Activated CD4-positive, alpha-beta memory T cell treated with anti-CD3 and anti-CD28 coated beads for 36 hours (primary cell): ENCODE measurements at regions of chr20 and their contacts with region 1.

Region 1: GRCh38 chr20:45373353-45374100 is 4.6 kb downstream of the TP53TG5 start:
- DNase-seq: peak; percentile 94
- H3K4me3 Mint-ChIP-seq: peak overlapping the region; percentile 79
- H3K27ac Mint-ChIP-seq: peak overlapping the region; percentile 87
- H3K4me1 Mint-ChIP-seq: peaks cover 25% of the 10 kb centered on the region
- H3K27me3 Mint-ChIP-seq: no peaks in the 10 kb centered on the region

Region 2: DNA sequence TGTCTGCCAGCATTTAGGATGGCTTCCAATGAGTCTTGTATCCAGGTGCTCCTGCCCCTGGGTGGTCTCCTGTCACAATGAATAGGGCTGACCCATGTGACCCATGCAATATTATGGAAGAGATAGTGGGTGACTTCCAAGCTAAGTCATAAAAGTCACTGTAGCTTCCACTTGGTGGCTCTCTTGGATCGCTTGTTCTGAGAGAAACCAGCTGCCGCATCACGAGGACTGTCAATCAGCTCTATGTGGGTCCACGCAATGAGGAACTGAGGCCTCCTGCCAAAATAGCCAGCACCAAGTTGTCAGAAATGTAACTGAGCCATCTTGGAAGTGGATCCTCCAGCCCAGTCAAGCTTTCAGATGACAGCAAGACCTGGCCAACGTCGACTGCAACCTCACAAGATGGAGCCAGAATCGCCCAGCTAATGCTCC is 50.6 kb before region 1 on chr20:
- CTCF ChIA-PET with region 1: interaction called, 41 read pairs
- POLR2A ChIA-PET with region 1: no interaction called
- intact Hi-C with region 1: no loop called
- DNase-seq: no peak
- H3K4me3 Mint-ChIP-seq: no peak overlapping the region
- H3K27ac Mint-ChIP-seq: no peak overlapping the region
- H3K4me1 Mint-ChIP-seq: peaks cover 26% of the 10 kb centered on the region
- H3K27me3 Mint-ChIP-seq: no peaks in the 10 kb centered on the region

Region 3: GRCh38 chr20:45362804-45363610 is 10.5 kb before region 1 on chr20 and contains the start of gene SYS1:
- CTCF ChIA-PET with region 1: interaction called, 175 read pairs
- POLR2A ChIA-PET with region 1: interaction called, 19 read pairs
- intact Hi-C with region 1: loop called (anchors 1 kb)
- DNase-seq: peak; percentile 99
- H3K4me3 Mint-ChIP-seq: peak within 1 kb of the TSS; percentile 96
- H3K27ac Mint-ChIP-seq: peak within 1 kb of the TSS; percentile 94
- H3K4me1 Mint-ChIP-seq: peaks cover 46% of the 10 kb centered on the region
- H3K27me3 Mint-ChIP-seq: no peaks in the 10 kb centered on the region
- total RNA-seq, gene SYS1: 19.9 to 24.8 TPM

Region 4: DNA sequence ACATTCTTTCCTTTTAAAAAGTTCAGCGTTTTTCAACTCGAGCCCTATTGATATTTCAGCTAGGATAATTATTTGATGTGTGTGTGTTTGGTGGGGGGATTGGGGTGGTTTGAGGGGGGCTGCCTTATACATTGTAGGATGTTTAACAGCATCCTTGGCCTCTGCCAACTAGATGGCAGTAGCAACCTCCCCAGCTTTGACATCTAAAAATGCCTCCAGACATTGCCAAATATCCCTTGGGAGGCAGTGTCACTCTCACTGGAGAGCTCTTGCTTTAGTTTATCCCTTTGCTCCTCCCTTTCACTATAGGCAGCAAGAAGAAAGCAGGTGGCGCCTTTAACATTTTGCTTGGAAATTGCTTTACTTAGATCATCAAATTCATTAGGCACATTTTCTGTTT is 19.2 kb after region 1 on chr20:
- CTCF ChIA-PET with region 1: interaction called, 18 read pairs
- POLR2A ChIA-PET with region 1: interaction called, 3 read pairs
- intact Hi-C with region 1: no loop called
- DNase-seq: no peak
- H3K4me3 Mint-ChIP-seq: no peak overlapping the region
- H3K27ac Mint-ChIP-seq: no peak overlapping the region
- H3K4me1 Mint-ChIP-seq: peaks cover 14% of the 10 kb centered on the region
- H3K27me3 Mint-ChIP-seq: no peaks in the 10 kb centered on the region

Region 5: DNA sequence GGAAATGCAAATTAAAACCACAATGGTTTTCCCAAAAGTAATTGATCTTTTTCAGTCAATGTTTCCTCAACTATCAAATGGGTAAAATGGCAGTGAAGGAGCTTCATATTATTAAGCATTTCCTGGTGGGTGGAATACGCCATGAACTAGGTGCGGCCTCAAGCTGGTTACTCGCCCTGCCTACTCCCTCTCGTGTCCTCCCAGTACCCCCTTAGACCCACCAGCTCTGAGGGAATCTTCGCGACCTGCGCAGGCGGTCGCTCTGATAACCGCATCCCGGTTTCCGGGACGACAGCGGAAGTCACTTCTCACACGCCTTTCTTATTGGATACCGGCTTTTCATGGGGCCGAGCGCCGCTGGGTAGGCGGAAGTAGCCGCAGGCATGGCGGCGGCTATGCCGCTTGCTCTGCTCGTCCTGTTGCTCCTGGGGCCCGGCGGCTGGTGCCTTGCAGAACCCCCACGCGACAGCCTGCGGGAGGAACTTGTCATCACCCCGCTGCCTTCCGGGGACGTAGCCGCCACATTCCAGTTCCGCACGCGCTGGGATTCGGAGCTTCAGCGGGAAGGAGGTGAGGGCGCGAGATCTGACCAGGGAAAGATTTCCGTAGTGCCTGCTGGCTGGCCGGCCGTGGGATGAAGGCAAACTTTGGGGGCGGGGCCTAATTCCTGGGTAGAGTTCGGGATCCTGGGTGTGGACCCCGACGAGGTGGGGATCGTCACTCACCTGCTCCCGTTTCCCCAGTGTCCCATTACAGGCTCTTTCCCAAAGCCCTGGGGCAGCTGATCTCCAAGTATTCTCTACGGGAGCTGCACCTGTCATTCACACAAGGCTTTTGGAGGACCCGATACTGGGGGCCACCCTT is 42.5 kb after region 1 on chr20 and contains the start of gene PIGT:
- CTCF ChIA-PET with region 1: interaction called, 86 read pairs
- POLR2A ChIA-PET with region 1: interaction called, 10 read pairs
- intact Hi-C with region 1: no loop called
- DNase-seq: peak; percentile 93
- H3K4me3 Mint-ChIP-seq: peak within 1 kb of the TSS; percentile 91
- H3K27ac Mint-ChIP-seq: peak within 1 kb of the TSS; percentile 97
- H3K4me1 Mint-ChIP-seq: peaks cover 47% of the 10 kb centered on the region
- H3K27me3 Mint-ChIP-seq: no peaks in the 10 kb centered on the region
- total RNA-seq, gene PIGT: 41.5 to 44.4 TPM

Region 6: GRCh38 chr20:45436732-45437391 is 63.3 kb after region 1 on chr20:
- CTCF ChIA-PET with region 1: interaction called, 503 read pairs
- POLR2A ChIA-PET with region 1: interaction called, 15 read pairs
- intact Hi-C with region 1: loop called (anchors 1 kb)
- DNase-seq: peak; percentile 90
- H3K4me3 Mint-ChIP-seq: peak overlapping the region; percentile 73
- H3K27ac Mint-ChIP-seq: no peak overlapping the region
- H3K4me1 Mint-ChIP-seq: peaks cover 15% of the 10 kb centered on the region
- H3K27me3 Mint-ChIP-seq: no peaks in the 10 kb centered on the region

Region 7: DNA sequence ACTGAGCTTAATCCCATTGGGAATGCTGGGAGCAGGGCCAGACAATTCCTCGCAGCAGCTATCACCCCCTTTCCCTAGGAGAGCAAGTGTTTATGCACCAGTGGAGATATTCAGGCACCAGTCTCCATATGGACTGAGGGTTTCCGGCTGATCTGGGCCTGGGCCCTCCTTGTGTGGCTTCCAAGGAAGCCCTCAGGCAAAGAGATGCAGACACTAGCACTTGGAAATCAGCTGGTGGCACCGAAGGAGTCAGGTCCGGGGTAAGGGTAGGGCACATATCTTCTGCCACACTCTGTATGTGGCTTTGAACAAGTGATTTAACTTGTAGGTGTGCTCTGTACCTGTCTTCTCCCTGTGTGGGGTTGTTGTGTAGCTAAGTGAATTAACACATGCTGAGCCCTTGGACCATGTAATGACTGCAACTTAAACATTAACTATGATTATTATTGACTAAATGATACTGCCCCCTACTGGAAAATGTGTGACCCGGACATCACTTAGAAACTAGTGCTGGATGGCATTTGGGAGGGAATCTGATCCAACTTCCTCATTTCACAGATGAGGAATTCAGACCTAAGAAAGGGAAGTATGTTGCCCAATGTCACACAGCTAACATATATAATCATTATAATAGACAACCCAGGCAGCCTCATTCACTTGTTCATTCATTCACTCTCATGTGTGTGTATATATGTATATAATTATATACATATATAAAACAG is 76.7 kb after region 1 on chr20:
- CTCF ChIA-PET with region 1: interaction called, 41 read pairs
- POLR2A ChIA-PET with region 1: no interaction called
- intact Hi-C with region 1: no loop called
- DNase-seq: no peak
- H3K4me3 Mint-ChIP-seq: no peak overlapping the region
- H3K27ac Mint-ChIP-seq: no peak overlapping the region
- H3K4me1 Mint-ChIP-seq: no peaks in the 10 kb centered on the region
- H3K27me3 Mint-ChIP-seq: peaks cover 3% of the 10 kb centered on the region